ENCODE measurements at regions of chr5 and their contacts with region 1.

Region 1: DNA sequence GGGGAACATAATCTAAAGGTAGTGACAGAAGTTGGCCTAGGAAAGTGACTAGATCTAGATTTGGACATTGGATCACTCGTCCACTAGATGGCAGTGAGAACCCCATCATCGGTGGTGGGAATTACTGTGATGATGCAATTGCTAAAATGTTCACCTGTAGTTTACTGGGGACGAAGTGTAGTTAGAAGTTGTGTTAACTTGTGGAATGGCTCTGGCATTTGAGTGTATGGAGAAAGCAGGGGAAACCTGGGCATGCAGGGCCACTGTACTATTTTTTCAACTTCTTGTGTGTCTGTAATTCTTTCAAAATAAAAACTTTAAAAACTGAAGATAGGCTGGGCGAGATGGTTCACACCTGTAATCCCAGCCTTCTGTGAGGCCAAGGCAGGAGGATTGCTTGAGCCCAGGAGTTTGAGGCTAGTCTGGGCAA is 75.5 kb downstream of the PHAX start:
- DNase-seq: peak in 4 of 6 donors; percentile 23 to 71 (median 38)
- ATAC-seq: peak; percentile 86 to 99 (median 96)
- H3K4me3 ChIP-seq: no peak overlapping the region
- H3K27ac ChIP-seq: no peak overlapping the region
- H3K4me1 ChIP-seq: no peaks in the 10 kb centered on the region
- H3K27me3 ChIP-seq: no peaks in the 10 kb centered on the region
- CTCF ChIP-seq: peak; percentile 72 to 82 (median 76)

Region 2: GRCh38 chr5:126499853-126500342 is 176.3 kb before region 1 on chr5:
- intact Hi-C with region 1: no loop called
- DNase-seq: no peak
- ATAC-seq: peak in 3 of 4 donors; percentile 36 to 79 (median 47)
- H3K4me3 ChIP-seq: no peak overlapping the region
- H3K27ac ChIP-seq: no peak overlapping the region
- H3K4me1 ChIP-seq: peaks cover 0 to 9% (median 0%) of the 10 kb centered on the region in 3 donors
- H3K27me3 ChIP-seq: no peaks in the 10 kb centered on the region
- CTCF ChIP-seq: peak; percentile 16 to 48 (median 36)

Region 3: DNA sequence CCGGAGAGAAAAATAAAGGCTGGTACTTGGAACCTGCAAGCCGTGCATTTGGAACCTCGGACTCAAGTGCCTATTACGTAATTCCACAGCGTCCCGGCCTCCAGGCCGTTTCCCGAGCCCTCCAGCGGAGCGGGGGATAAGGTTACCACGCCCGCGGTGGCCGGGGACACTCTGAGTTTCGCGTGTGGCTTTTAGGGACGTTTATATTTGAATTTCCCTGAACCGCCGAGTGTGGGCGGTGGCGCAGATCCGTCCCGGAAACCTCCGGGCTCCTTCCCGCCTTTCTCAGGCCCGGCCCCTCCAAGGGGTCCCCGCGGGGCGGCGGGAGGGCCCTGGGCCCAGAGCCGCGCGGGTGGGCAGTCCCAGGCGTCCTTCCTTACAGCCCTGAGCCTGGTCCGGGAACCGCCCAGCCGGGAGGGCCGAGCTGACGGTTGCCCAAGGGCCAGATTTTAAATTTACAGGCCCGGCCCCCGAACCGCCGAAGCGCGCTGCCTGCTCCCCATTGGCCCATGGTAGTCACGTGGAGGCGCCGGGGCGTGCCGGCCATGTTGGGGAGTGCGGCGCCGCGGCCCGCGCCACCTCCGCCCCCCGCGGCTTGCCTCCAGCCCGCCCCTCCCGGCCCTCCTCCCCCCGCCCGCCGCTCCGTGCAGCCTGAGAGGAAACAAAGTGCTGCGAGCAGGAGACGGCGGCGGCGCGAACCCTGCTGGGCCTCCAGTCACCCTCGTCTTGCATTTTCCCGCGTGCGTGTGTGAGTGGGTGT is 100.5 kb after region 1 on chr5 and contains the start of gene LMNB1:
- intact Hi-C with region 1: loop called in 2 of 3 experiments (anchors 5 kb)
- DNase-seq: peak; percentile 94 to 97 (median 94)
- ATAC-seq: peak; percentile 89 to 94 (median 94)
- H3K4me3 ChIP-seq: peak within 1 kb of the TSS; percentile 69 to 86 (median 79)
- H3K27ac ChIP-seq: peak within 1 kb of the TSS; percentile 90 to 97 (median 94)
- H3K4me1 ChIP-seq: peaks cover 0 to 6% (median 4%) of the 10 kb centered on the region in 3 donors
- H3K27me3 ChIP-seq: no peaks in the 10 kb centered on the region
- CTCF ChIP-seq: no peak
- total RNA-seq, gene LMNB1: 1.5 to 7.5 (median 4.3) TPM

Region 4: DNA sequence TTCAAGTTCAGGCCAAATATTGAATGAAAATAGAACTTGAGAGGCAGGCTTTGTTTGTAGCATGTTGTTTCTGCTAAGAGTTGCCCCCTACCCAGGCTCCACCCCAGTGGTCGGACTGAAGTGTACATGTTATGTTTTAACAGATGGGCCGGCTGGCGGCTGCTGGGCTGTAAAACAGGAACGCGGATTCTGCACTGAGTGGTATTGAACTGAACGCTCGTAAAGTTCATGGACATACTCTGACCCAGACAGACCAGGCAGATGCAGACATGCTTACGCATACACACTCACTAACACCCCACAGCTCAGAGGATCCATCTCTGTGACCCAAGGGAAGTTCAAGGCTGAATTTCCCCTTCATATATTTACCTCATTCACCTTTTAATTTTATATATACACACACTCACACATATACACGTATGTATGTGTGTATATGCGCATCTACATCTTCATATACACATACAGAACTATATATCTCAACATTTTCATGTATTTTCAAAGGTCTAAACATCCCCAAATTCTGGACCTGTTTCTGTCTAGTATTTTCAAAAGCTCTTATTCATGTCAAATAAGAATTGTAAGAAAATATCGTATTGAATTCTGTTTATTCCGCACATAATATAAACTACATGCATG is 352.7 kb after region 1 on chr5:
- intact Hi-C with region 1: no loop called
- DNase-seq: no peak
- ATAC-seq: no peak
- H3K4me3 ChIP-seq: peak overlapping the region in 2 of 4 donors; percentile 40 to 76
- H3K27ac ChIP-seq: no peak overlapping the region
- H3K4me1 ChIP-seq: peaks cover 0 to 10% (median 4%) of the 10 kb centered on the region in 3 donors
- H3K27me3 ChIP-seq: no peaks in the 10 kb centered on the region
- CTCF ChIP-seq: no peak